A549 (cell line): ENCODE measurements at regions of chr3 and their contacts with region 1.

Region 1: DNA sequence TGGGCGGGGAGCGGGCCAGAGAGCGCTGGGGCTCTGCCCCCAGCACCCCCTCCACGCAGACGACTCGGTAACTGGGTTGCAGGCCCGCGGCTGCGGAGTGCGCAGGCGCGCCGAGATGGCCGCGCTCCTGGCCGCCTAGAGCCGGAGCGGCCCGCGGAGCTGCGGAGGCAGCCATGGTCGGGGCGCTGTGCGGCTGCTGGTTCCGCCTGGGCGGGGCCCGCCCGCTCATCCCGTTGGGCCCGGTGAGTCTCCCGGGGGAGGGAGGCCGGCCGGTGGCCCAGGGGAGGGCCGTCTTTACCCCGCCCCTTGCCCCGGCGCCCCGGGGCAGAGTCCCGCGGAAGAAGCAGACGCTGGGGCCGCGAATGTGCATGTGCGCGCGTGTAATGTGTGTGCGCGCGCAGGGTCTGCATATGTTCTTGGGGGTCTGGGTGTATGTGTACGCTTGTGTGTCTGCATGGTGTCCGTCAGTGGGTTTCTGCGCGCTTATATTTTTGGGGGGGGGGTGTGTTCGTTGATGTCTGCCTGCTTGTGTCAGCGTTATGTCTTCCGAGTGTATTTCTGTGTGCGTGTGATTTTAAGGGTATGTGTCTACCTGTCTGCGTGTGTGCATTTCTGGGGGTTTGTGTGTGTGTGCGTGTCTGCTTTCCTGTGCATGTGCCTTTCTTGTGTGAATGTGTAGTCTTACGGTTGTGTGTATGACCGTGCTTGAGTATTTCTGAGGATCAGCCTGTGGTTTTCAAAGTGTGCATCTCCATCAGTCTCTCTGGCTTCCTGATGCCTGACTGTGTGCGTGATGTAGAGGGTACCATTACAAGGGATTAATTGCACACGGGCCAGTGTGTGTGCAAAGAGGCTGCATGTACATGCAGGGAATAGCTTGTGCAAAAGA is at the start of gene ABHD14A:
- DNase-seq: peak; percentile 55 to 68
- ATAC-seq: peak; percentile 80 to 88
- H3K4me3 ChIP-seq: peak within 1 kb of the TSS; percentile 87
- H3K27ac ChIP-seq: peak within 1 kb of the TSS; percentile 99
- H3K4me1 ChIP-seq: peaks cover 14% of the 10 kb centered on the region
- CTCF ChIP-seq: no peak
- EP300 ChIP-seq: no peak
- POLR2A ChIP-seq: peak; percentile 86
- RAD21 ChIP-seq: no peak
- polyA plus RNA-seq, gene ABHD14A: 6.3 and 7.5 TPM in 2 replicates

Region 2: GRCh38 chr3:51955893-51956770 is 19.1 kb before region 1 on chr3:
- CTCF ChIA-PET with region 1: interaction called, 36 read pairs
- POLR2A ChIA-PET with region 1: no interaction called
- DNase-seq: no peak
- ATAC-seq: peak in 1 of 2 experiments; percentile 48; a peak in 3 of 6 replicates
- H3K4me3 ChIP-seq: no peak overlapping the region
- H3K27ac ChIP-seq: no peak overlapping the region
- H3K4me1 ChIP-seq: no peaks in the 10 kb centered on the region; the same call in 1 of the 3 replicates
- CTCF ChIP-seq: no peak
- EP300 ChIP-seq: no peak
- POLR2A ChIP-seq: no peak
- RAD21 ChIP-seq: no peak